GM13976 (cell line): ENCODE measurements at regions of chr5 and their contacts with region 1.

Region 1: DNA sequence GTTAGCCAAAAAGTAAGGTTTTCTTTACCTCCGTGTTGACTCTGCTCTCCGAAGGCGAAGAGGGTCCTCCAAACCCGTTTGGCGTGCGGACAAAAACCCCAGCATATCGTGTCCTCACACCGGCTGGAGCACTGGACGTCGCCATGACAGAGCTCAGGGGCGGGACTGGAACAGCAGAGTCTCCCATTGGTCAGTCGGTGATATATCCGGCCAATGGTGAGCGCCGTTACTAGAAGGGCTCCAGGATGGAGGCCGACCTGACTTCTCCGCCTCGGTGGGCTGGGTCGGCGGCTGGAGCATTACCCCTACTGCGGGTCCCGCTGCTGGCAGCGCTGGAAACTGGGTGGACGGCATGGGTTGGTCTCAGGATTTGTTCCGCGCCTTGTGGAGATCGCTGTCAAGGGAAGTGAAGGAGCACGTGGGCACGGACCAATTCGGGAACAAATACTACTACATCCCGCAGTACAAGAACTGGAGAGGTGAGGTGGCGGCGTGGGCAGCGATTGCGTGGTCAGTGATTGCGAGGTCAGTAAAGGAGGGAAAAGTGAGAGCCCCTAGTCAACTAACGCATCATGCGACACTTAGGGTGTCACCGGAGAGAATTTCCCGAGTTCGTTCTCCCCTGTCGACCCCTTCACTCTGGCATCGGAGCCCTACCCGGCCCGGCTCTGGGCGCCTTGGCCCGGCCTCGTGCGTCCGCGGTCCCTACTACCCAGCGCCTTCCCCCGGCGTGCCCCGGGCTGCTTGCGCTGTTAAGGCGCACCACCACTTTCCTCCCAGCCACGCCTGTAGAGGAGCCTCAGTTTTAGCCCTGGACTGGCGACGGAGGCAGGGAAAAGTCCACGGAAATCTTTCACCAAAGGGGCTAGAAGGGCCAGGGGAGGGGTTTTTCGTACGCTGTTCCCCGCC is at the starts of genes ERCC8 and NDUFAF2:
- DNase-seq: peak; percentile 97
- CTCF ChIP-seq: no peak

Region 2: DNA sequence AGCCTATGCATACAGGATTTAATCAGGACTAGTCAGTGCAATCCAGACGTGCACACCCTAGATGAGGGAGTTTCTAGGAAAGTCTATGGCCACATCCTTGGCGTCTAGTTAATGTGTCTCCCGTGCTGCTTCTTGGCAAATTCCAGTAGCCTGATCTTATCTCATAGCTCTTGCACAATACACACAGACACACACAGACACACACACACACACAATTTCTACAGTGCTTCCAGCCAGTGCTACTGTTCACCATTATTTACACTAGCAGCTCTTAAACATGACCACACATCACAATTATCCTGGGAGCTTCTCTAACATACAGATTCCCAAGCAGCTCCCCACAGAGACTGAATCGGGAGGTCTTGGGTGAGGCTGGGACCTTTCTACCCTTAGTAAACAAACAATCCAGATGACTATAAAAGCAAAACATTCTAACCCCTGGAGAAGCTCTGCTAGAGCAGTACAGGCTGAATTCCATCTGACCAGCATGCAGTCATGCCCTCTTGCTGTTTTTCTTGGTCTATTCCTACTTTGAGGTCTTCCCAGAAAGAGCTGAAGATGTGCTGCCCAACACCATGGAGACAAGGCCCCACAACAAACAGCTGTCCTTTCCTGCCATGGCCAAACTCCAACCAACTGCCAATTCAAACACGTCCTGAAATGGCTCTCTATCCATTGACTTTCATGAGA is 481.8 kb before region 1 on chr5:
- in situ Hi-C with region 1: no loop called
- DNase-seq: no peak
- CTCF ChIP-seq: no peak

Region 3: GRCh38 chr5:60699530-60700382 is 245.4 kb before region 1 on chr5 and contains the start of gene DEPDC1B:
- in situ Hi-C with region 1: loop called (anchors 25 kb)
- DNase-seq: peak; percentile 93
- CTCF ChIP-seq: no peak